Sigmoid colon (tissue), 7 donors: ENCODE measurements at regions of chr14 and their contacts with region 1.

Region 1: GRCh38 chr14:88551094-88551870 is 3.5 kb downstream of the PTPN21 start:
- DNase-seq: peak; percentile 91
- H3K4me3 ChIP-seq: peak overlapping the region; percentile 56 to 75 (median 61)
- H3K27ac ChIP-seq: peak overlapping the region; percentile 73 to 90 (median 83)
- H3K4me1 ChIP-seq: peaks cover 0 to 45% (median 34%) of the 10 kb centered on the region in 4 donors
- H3K27me3 ChIP-seq: no peaks in the 10 kb centered on the region
- CTCF ChIP-seq: peak in 2 of 4 experiments; percentile 24 to 48
- EP300 ChIP-seq: no peak
- POLR2A ChIP-seq: peak; percentile 49 to 56

Region 2: DNA sequence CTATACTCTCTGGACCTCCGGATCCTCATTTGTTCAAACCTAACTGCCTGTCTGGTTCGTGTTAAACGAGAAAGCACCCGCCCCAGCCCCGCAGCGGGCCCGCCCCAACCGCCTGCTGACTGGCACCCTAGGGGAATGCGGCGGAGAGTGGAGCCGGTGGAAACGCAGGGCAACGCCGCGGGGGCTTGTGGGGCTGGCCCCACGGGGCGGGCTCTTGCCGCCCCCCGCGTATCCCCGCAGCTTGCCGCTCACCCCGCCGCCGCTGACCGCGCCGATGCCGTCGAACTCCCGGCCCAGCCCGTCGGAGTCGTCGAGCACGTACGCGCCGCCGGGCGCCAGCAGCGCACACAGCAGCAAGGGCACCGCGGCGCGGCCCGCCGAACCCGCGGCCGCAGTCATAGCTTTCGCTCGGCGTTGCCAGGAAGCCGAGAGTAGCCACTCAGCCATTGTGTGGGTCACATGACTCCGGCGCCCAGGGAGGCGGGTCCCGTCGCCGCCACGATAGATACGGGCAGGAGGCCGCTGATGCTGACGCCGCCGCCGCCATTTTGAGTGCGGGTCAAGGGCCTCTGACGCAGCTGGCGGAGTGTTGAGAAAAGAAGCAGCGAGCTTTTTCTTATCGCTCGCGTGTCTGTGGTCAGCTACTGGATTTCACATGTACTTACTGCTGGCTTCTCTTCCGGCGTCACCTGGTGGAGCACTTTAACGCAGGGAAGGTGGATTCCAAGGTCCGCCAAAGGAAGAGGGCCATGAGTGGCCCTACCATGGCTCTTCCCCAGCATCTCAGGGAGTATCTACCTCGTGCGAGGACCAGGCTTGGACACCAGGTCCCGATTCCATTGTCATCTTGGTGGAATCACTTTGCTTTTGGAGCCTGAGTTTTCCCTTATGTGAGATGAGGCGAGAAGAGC is 558.3 kb before region 1 on chr14 and contains the start of gene GALC:
- intact Hi-C with region 1: loop called (anchors 5 kb)
- DNase-seq: peak; percentile 97
- H3K4me3 ChIP-seq: peak within 1 kb of the TSS; percentile 69 to 86 (median 84)
- H3K27ac ChIP-seq: peak within 1 kb of the TSS; percentile 91 to 98 (median 94)
- H3K4me1 ChIP-seq: peaks cover 0 to 18% (median 8%) of the 10 kb centered on the region in 4 donors
- H3K27me3 ChIP-seq: no peaks in the 10 kb centered on the region
- CTCF ChIP-seq: no peak
- EP300 ChIP-seq: no peak
- POLR2A ChIP-seq: no peak
- total RNA-seq, gene GALC: 11.3 to 22.8 (median 15.2) TPM

Region 3: GRCh38 chr14:88385345-88386101 is 165.8 kb before region 1 on chr14 and contains the start of gene SPATA7:
- intact Hi-C with region 1: loop called (anchors 10 kb)
- DNase-seq: peak; percentile 97
- H3K4me3 ChIP-seq: peak within 1 kb of the TSS; percentile 70 to 91 (median 75)
- H3K27ac ChIP-seq: peak within 1 kb of the TSS; percentile 80 to 84 (median 82)
- H3K4me1 ChIP-seq: peaks cover 0 to 19% (median 12%) of the 10 kb centered on the region in 4 donors
- H3K27me3 ChIP-seq: no peaks in the 10 kb centered on the region
- CTCF ChIP-seq: no peak
- EP300 ChIP-seq: peak in 1 of 4 donors; percentile 54
- POLR2A ChIP-seq: peak; percentile 17 to 63
- total RNA-seq, gene SPATA7: 15.5 to 38.8 (median 35.1) TPM

Region 4: GRCh38 chr14:88492272-88493089 is 58.8 kb before region 1 on chr14:
- intact Hi-C with region 1: loop called (anchors 1 kb)
- DNase-seq: peak; percentile 76
- H3K4me3 ChIP-seq: no peak overlapping the region
- H3K27ac ChIP-seq: no peak overlapping the region
- H3K4me1 ChIP-seq: peaks cover 0 to 7% (median 0%) of the 10 kb centered on the region in 4 donors
- H3K27me3 ChIP-seq: no peaks in the 10 kb centered on the region
- CTCF ChIP-seq: peak; percentile 64 to 91 (median 86)
- EP300 ChIP-seq: no peak
- POLR2A ChIP-seq: no peak

Region 5: GRCh38 chr14:88505481-88506020 is 45.7 kb before region 1 on chr14:
- intact Hi-C with region 1: no loop called
- DNase-seq: no peak
- H3K4me3 ChIP-seq: no peak overlapping the region
- H3K27ac ChIP-seq: no peak overlapping the region
- H3K4me1 ChIP-seq: no peaks in the 10 kb centered on the region
- H3K27me3 ChIP-seq: no peaks in the 10 kb centered on the region
- CTCF ChIP-seq: no peak
- EP300 ChIP-seq: no peak
- POLR2A ChIP-seq: no peak

Region 6: DNA sequence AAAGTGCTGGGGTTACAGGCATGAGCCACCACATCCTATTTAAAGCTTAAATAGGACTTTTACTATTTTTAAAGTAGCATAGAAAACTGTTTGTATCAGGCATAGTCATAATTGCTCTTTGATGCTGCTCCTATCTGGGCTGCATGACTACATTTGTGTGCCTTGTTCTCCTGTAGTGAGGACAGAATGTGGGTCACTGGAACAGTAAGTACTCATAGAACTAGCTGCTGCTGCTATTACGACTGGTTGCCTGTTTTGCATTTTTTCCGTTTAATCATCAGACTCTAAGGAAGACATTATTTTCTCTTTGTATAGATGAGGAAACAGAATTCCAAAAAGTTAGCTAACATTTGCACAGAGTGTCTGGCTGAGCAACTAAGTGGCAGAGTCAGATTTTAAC is 54.3 kb after region 1 on chr14:
- intact Hi-C with region 1: no loop called
- DNase-seq: no peak
- H3K4me3 ChIP-seq: no peak overlapping the region
- H3K27ac ChIP-seq: no peak overlapping the region
- H3K4me1 ChIP-seq: no peaks in the 10 kb centered on the region
- H3K27me3 ChIP-seq: no peaks in the 10 kb centered on the region
- CTCF ChIP-seq: no peak
- EP300 ChIP-seq: no peak
- POLR2A ChIP-seq: no peak

Region 7: GRCh38 chr14:88824314-88825077 is 273.2 kb after region 1 on chr14 and contains the start of gene TTC8:
- intact Hi-C with region 1: loop called (anchors 10 kb)
- DNase-seq: peak; percentile 90
- H3K4me3 ChIP-seq: peak within 1 kb of the TSS; percentile 58 to 81 (median 64)
- H3K27ac ChIP-seq: peak within 1 kb of the TSS; percentile 83 to 91 (median 84)
- H3K4me1 ChIP-seq: peaks cover 0 to 24% (median 9%) of the 10 kb centered on the region in 4 donors
- H3K27me3 ChIP-seq: no peaks in the 10 kb centered on the region
- CTCF ChIP-seq: no peak
- EP300 ChIP-seq: no peak
- POLR2A ChIP-seq: peak; percentile 55 to 62
- total RNA-seq, gene TTC8: 17.3 to 35.5 (median 27.1) TPM